Mucosa of descending colon (tissue), 3 donors: ENCODE measurements at regions of chr2 and their contacts with region 1.

Region 1: GRCh38 chr2:68441179-68441993 is 25.7 kb downstream of the FBXO48 start:
- DNase-seq: peak; percentile 47 to 77 (median 59)
- ATAC-seq: peak; percentile 96
- H3K4me3 ChIP-seq: no peak overlapping the region
- H3K4me1 ChIP-seq: no peaks in the 10 kb centered on the region
- CTCF ChIP-seq: peak; percentile 79

Region 2: DNA sequence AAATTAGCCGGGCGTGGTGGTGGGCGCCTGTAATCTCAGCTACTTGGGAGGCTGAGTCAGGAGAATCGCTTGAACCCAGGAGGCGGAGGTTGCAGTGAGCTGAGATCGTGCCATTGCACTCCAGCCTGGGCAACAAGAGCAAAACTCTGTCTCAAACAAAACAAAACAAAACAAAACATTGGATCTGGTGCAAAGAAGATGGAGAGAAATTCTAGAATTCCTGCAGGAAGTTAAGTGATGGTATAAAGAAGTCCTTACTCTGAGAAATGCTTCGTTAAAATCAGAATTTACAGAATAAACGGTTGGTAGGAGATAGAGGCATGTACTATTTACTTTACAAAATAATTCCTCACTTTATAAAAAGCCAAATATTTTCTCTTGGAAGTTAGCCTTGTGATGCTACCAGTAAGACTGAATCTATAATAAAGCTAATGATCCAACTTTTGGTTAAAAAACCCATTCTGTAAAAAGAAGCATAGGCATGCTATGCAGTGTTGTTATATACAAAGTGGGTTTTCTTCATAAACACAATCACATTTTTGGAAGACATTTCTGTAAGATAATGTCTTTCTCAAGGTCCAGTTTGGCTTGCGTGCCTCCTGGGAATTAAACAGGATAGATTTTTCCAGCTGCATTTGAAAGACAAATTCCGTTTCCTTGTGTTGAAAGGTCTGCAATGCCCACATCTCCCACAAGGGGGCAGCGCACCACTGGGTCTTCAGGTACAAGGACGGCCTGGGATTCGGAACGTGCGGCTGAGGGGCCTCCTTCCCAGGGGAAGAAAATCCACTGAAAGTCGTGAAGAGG is 319.3 kb before region 1 on chr2:
- intact Hi-C with region 1: loop called in 1 of 2 experiments (anchors 5 kb)
- DNase-seq: peak; percentile 80 to 96 (median 89)
- ATAC-seq: peak; percentile 89
- H3K4me3 ChIP-seq: no peak overlapping the region
- H3K4me1 ChIP-seq: no peaks in the 10 kb centered on the region
- CTCF ChIP-seq: peak; percentile 96

Region 3: GRCh38 chr2:68203587-68203986 is 237.8 kb before region 1 on chr2:
- intact Hi-C with region 1: no loop called
- DNase-seq: no peak
- ATAC-seq: no peak
- H3K4me3 ChIP-seq: no peak overlapping the region
- H3K4me1 ChIP-seq: peaks cover 10% of the 10 kb centered on the region
- CTCF ChIP-seq: no peak

Region 4: GRCh38 chr2:68251187-68251854 is 190.1 kb before region 1 on chr2:
- intact Hi-C with region 1: no loop called
- DNase-seq: peak; percentile 76 to 86 (median 82)
- ATAC-seq: peak; percentile 76
- H3K4me3 ChIP-seq: peak overlapping the region; percentile 89
- H3K4me1 ChIP-seq: peaks cover 35% of the 10 kb centered on the region
- CTCF ChIP-seq: no peak

Region 5: DNA sequence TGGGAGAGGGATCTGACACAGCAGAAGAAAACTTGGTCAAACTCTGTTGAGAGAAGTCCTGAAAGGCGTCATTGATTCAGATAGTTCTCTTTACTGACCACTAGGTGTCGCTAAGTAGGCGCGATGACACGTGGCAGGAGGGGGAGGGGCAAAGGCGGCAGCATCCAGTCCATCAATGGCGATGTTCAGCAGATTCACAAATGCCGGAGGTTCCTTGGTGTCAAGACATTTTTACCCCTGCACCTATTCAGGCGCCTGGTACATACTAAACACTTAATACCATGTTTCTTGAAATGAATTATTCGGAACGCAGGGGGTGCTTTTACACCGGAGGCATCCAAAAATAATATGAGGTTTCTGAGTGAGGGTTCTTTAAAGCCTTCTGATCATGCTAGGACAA is 79.3 kb before region 1 on chr2:
- intact Hi-C with region 1: loop called in 1 of 2 experiments (anchors 5 kb)
- DNase-seq: peak; percentile 71 to 86 (median 86)
- ATAC-seq: peak; percentile 94
- H3K4me3 ChIP-seq: no peak overlapping the region
- H3K4me1 ChIP-seq: no peaks in the 10 kb centered on the region
- CTCF ChIP-seq: peak; percentile 62